Transverse colon (tissue), 4 donors: ENCODE measurements at regions of chr6 and their contacts with region 1.

Region 1: GRCh38 chr6:8123236-8123635 is 20.9 kb upstream of the EEF1E1 start:
- DNase-seq: no peak
- H3K4me3 ChIP-seq: no peak overlapping the region
- H3K27ac ChIP-seq: no peak overlapping the region
- H3K4me1 ChIP-seq: no peaks in the 10 kb centered on the region
- H3K27me3 ChIP-seq: no peaks in the 10 kb centered on the region
- CTCF ChIP-seq: no peak
- EP300 ChIP-seq: no peak
- POLR2A ChIP-seq: no peak

Region 2: GRCh38 chr6:8207200-8208191 is 84.3 kb after region 1 on chr6:
- in situ Hi-C with region 1: loop called in 1 of 4 experiments (anchors 10 kb)
- intact Hi-C with region 1: no loop called
- DNase-seq: no peak
- H3K4me3 ChIP-seq: no peak overlapping the region
- H3K27ac ChIP-seq: no peak overlapping the region
- H3K4me1 ChIP-seq: no peaks in the 10 kb centered on the region
- H3K27me3 ChIP-seq: no peaks in the 10 kb centered on the region
- CTCF ChIP-seq: no peak
- EP300 ChIP-seq: no peak
- POLR2A ChIP-seq: no peak

Region 3: DNA sequence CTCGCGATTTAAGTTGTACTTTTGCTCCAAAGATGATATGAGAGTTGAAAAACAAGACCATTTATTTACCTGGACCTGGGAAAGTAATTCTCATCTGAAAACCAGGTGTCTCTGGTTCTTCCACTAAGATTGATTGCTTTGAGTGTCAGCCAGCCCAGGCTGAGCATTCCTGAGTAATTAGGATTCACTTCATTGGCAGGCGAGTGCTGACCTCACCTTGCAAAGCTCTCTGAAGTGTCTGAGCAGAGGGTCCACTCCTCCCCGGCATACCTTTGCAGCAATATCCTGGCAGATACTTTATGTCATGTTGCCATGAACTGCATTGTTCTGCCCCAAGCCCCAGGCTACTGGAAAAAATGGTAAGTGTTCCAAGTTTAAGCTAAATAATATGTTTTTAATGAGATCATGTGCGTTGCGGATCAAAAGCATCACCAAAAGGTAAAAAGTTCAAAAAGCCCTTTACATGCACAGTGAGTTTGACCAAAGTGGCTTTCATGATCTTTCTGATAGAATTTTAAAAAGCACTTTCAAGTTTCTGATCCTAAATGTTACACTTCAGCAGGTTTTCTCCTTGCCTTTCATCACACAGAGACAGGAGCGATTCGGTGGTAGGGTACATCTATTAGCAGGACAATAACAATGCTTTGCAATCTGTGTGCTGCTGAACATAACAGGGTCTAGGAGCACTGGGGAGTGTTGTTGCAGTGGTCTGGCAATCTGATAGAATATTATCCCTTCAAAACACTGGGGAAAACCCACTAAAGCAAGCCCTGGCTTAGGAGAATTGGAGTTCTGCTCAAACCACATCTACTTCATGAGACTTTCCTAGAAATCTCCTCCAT is 106.9 kb after region 1 on chr6:
- in situ Hi-C with region 1: loop called in 1 of 4 experiments (anchors 10 kb)
- intact Hi-C with region 1: no loop called
- DNase-seq: no peak
- H3K4me3 ChIP-seq: no peak overlapping the region
- H3K27ac ChIP-seq: no peak overlapping the region
- H3K4me1 ChIP-seq: no peaks in the 10 kb centered on the region
- H3K27me3 ChIP-seq: no peaks in the 10 kb centered on the region
- CTCF ChIP-seq: no peak
- EP300 ChIP-seq: no peak
- POLR2A ChIP-seq: no peak